Activated CD4-positive, alpha-beta T cell treated with anti-CD3 and anti-CD28 coated beads, Interleukin-2, amount 10 ng/mL, durations not matched to agents 7 days and 5 days (primary cell): ENCODE measurements at regions of chr9 and their contacts with region 1.

Region 1: GRCh38 chr9:101530077-101530711 is 3.5 kb upstream of the RNF20 start:
- DNase-seq: peak; percentile 72
- H3K4me3 Mint-ChIP-seq: no peak overlapping the region
- H3K27ac Mint-ChIP-seq: no peak overlapping the region
- H3K4me1 Mint-ChIP-seq: peaks cover 13% of the 10 kb centered on the region
- H3K27me3 Mint-ChIP-seq: peaks cover 2% of the 10 kb centered on the region

Region 2: GRCh38 chr9:101458955-101459631 is 71.1 kb before region 1 on chr9:
- CTCF ChIA-PET with region 1: interaction called, 16 read pairs
- POLR2A ChIA-PET with region 1: no interaction called
- DNase-seq: peak; percentile 33
- H3K4me3 Mint-ChIP-seq: no peak overlapping the region
- H3K27ac Mint-ChIP-seq: no peak overlapping the region
- H3K4me1 Mint-ChIP-seq: no peaks in the 10 kb centered on the region
- H3K27me3 Mint-ChIP-seq: peaks cover 6% of the 10 kb centered on the region

Region 3: DNA sequence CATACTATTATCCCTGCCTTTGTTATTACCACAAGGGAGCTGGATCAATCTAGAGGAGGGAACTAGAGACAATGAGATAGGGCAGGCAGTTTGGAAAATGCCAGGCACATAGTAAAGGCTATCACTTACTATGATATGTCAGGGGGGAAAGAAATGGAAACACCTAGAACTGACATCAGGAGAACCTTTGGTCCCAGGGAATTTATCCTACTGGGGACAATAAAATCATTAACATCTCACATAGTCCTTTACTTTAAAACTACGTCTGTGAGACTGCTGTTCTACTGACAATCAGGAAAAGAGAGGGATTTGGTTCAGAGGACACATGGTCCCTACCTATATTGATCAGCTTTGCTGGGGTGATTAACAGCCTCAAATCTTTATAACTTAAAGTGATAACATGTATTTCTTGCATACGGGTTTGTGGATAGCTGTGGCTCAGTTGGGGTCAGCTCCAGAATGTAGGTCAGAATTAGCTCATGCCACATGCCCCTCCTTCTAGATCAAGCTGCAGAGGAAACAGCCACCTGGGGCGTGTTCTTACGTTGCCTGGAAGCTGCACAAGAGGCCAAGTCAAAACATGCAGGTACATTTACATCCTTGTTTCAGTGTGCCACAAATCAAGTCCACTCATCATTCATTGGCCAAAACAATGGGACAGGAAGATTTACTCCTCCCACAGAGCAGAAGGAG is 50.7 kb before region 1 on chr9:
- CTCF ChIA-PET with region 1: no interaction called
- POLR2A ChIA-PET with region 1: no interaction called
- DNase-seq: no peak
- H3K4me3 Mint-ChIP-seq: no peak overlapping the region
- H3K27ac Mint-ChIP-seq: no peak overlapping the region
- H3K4me1 Mint-ChIP-seq: no peaks in the 10 kb centered on the region
- H3K27me3 Mint-ChIP-seq: peaks cover 23% of the 10 kb centered on the region

Region 4: GRCh38 chr9:101578378-101578777 is 48.2 kb after region 1 on chr9:
- CTCF ChIA-PET with region 1: no interaction called
- POLR2A ChIA-PET with region 1: no interaction called
- DNase-seq: no peak
- H3K4me3 Mint-ChIP-seq: no peak overlapping the region
- H3K27ac Mint-ChIP-seq: no peak overlapping the region
- H3K4me1 Mint-ChIP-seq: peaks cover 15% of the 10 kb centered on the region
- H3K27me3 Mint-ChIP-seq: no peaks in the 10 kb centered on the region